ENCODE measurements at regions of chr1 and their contacts with region 1.

Region 1: GRCh38 chr1:206612129-206612876 is at the start of gene EIF2D:
- DNase-seq: peak; percentile 98 to 100 (median 100)
- ATAC-seq: peak; percentile 98
- H3K4me3 ChIP-seq: peak within 1 kb of the TSS; percentile 97
- H3K27ac ChIP-seq: peak within 1 kb of the TSS; percentile 94
- H3K4me1 ChIP-seq: peaks cover 5 to 7% of the 10 kb centered on the region in 2 experiments; a peak in 4 of 5 replicates
- H3K27me3 ChIP-seq: no peaks in the 10 kb centered on the region
- CTCF ChIP-seq: peak; percentile 98 to 99 (median 98)
- EP300 ChIP-seq: no peak
- POLR2A ChIP-seq: peak; percentile 99
- RAD21 ChIP-seq: peak; percentile 73
- polyA plus RNA-seq, gene EIF2D: 86.9 to 130 TPM

Region 2: DNA sequence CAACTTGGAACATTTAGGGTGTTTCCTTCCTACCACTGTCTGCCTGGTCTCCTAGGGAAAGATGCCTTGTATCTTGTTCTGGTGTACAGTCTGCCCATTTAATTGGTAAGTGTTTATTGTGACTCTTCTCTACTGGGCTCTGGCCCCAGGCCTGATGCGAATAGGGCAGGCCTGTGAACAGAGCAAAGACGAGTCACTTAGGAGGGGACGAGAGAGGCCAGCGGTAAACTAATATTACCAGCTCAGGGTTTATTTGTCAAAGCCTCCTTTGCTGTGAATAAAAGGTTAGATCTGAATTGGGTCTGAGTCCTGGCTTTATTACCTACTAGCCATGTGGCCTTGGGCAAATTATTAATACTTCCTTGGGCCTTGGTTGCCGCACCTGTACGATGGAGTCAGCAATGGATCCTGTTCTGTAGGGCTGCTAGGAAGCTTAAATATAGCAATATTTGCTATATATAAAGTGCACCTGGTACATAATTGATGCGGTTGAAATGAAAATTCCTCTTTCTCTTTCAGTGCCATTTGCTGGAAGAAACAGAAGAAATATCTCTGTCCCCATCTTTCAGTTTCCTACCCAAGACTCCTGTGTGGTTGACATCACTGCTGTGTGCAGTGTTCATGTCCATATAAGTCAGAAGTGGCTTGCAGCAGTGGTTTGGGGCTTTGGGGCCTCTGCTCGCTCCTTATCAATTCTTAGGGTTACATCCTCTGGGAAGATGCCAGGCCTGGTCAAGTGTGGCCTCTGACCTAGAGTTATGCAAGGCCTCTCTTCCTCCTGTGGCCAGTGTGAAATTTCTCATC is 104.8 kb after region 1 on chr1:
- CTCF ChIA-PET with region 1: no interaction called
- POLR2A ChIA-PET with region 1: interaction called, 4 read pairs
- in situ Hi-C with region 1: no loop called
- intact Hi-C with region 1: loop called (anchors 5 kb)
- DNase-seq: peak in 2 of 4 experiments; percentile 72 to 92
- ATAC-seq: peak; percentile 75
- H3K4me3 ChIP-seq: no peak overlapping the region
- H3K27ac ChIP-seq: peak overlapping the region; percentile 57
- H3K4me1 ChIP-seq: peaks cover 38 to 66% of the 10 kb centered on the region in 2 experiments
- H3K27me3 ChIP-seq: no peaks in the 10 kb centered on the region
- CTCF ChIP-seq: no peak
- EP300 ChIP-seq: peak; percentile 83
- POLR2A ChIP-seq: no peak
- RAD21 ChIP-seq: peak in 1 of 2 experiments; percentile 40; a peak in 2 of 4 replicates

Region 3: GRCh38 chr1:206808615-206809014 is 196.3 kb after region 1 on chr1:
- CTCF ChIA-PET with region 1: interaction called, 5 read pairs
- POLR2A ChIA-PET with region 1: no interaction called
- in situ Hi-C with region 1: no loop called
- intact Hi-C with region 1: loop called (anchors 5 kb)
- DNase-seq: peak; percentile 30 to 71 (median 48)
- ATAC-seq: peak; percentile 97
- H3K4me3 ChIP-seq: no peak overlapping the region
- H3K27ac ChIP-seq: no peak overlapping the region
- H3K4me1 ChIP-seq: no peaks in the 10 kb centered on the region
- H3K27me3 ChIP-seq: peaks cover 5 to 13% of the 10 kb centered on the region in 2 experiments; a peak in 3 of 5 replicates
- CTCF ChIP-seq: peak; percentile 75 to 81 (median 77)
- EP300 ChIP-seq: no peak
- POLR2A ChIP-seq: no peak
- RAD21 ChIP-seq: peak; percentile 92 to 95

Region 4: DNA sequence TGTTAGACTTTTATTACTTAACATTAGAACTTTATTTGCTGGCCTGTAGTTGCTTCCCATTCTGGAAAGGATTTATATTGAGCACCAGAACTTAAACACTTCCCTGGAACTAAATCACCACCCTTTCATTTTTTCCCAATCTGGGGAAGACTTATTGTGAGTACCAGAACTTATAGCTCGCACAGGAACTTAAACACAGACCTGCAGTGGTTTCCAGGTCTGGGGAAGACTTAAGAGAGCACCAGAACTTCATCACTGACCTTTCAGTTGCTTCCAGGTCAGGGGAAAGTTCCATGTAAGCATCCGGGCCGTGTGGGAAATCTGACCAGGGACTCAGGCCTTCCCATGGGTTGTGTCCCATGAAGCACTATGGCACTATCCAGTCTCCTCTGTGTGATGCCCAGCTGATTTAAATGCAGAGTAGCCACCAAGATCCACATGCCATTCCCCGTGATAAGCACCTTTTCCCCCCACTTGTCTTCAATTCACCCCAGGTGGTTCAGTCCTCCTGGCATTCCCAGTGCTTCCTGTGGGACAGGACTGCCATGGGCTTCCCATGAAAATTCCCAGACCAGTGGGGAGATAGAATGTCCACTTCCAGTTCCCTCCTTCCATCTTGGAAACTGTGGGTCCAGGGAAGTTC is 540.6 kb after region 1 on chr1:
- CTCF ChIA-PET with region 1: no interaction called
- POLR2A ChIA-PET with region 1: no interaction called
- in situ Hi-C with region 1: no loop called
- intact Hi-C with region 1: no loop called
- DNase-seq: peak in 1 of 4 experiments; percentile 20
- ATAC-seq: no peak
- H3K4me3 ChIP-seq: no peak overlapping the region
- H3K27ac ChIP-seq: no peak overlapping the region
- H3K4me1 ChIP-seq: no peaks in the 10 kb centered on the region
- H3K27me3 ChIP-seq: no peaks in the 10 kb centered on the region
- CTCF ChIP-seq: no peak
- EP300 ChIP-seq: no peak
- POLR2A ChIP-seq: no peak
- RAD21 ChIP-seq: no peak

Region 5: DNA sequence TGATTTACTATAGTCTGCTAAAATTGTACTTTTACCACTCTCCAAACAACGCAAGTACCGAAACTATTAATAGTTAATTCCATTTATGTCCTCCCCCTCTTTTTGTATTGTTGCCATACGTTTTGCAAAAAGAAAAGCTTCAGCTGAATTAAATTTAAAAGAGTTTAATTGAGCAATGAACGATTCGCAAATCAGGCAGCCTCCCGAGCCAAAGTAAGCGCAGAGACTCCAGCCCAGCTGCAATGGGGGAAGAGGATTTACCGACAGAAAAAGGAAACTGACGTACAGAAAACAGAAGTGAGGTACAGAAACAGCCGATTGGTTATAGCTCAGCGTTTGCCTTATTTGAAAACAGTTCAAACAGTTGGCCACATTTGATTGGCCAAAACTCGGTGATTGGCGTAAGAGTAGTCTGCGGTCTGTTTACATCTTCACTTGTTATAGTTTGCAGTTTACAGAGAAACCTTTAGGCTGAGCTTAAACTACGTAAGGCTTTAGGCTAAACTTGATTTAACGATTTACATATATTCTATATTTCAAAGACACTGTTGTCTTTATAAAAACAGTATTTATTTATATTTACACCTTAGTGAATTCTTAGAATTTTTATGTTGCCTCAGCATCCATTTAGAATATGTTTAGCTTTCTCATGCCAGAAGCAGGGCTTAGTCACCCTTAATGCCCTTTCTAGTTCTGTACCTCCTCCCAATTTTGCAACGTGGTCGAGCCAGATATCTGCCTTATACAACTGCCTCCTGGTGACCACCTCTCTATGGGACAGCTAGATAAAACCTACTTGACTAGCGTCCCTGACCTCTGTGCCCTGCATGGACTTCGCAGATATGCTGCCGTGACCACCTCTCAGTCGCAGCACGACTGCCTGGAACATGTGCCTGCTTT is 907.5 kb after region 1 on chr1:
- CTCF ChIA-PET with region 1: no interaction called
- POLR2A ChIA-PET with region 1: interaction called, 4 read pairs
- in situ Hi-C with region 1: loop called (anchors 25 kb)
- intact Hi-C with region 1: no loop called
- DNase-seq: peak; percentile 42 to 100 (median 68)
- ATAC-seq: peak; percentile 91
- H3K4me3 ChIP-seq: peak overlapping the region; percentile 27
- H3K27ac ChIP-seq: peak overlapping the region; percentile 92
- H3K4me1 ChIP-seq: peaks cover 13 to 25% of the 10 kb centered on the region in 2 experiments; a peak in 4 of 5 replicates
- H3K27me3 ChIP-seq: no peaks in the 10 kb centered on the region
- CTCF ChIP-seq: no peak
- EP300 ChIP-seq: peak; percentile 94
- POLR2A ChIP-seq: peak; percentile 89
- RAD21 ChIP-seq: no peak